Activated CD4-positive, alpha-beta T cell treated with anti-CD3 and anti-CD28 coated beads, Interleukin-2, amount 10 ng/mL, durations not matched to agents 24 days and 14 days (primary cell): ENCODE measurements at regions of chr9 and their contacts with region 1.

Region 1: DNA sequence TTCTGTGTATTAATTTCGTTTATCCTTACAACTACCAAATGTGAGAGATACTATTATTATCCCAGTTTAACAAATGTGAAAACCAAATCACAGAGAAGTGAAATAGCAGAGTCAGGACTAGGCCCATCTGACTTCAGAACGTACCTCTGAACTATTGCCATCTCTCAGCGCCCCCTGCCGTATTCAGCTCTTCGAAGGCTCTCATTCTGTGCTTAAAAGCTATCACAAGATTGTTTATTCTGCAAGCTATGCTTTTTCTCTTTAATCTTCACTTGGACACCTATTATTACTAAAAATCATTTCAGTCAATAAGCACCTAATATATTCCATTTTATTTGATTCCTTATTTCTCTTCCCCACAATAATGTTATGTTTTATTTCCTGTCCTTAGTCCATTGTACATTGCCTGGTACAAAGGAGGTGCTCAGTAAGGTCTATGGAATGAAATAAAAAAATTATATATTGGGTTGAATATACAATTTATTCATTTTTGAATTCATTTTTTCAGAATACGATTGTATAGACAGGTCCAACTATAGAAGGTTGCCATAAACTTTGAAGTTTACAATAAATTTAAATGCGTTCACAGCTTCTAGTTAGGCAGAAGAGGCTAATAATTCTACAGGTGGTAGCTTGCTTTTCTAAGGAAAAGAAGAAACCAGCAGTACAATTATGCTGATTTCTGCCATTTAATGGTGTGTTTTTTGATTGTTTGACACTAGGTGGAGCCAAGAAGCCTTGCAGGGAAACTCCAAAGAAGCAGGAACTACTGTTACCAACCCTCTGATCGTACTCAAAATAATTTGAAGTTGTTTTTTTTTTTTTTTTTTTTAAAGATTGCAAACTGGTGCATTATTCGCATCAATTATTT is 202.2 kb upstream of the DMRTA1 start:
- DNase-seq: peak; percentile 74
- H3K4me3 Mint-ChIP-seq: no peak overlapping the region
- H3K27ac Mint-ChIP-seq: no peak overlapping the region
- H3K4me1 Mint-ChIP-seq: peaks cover 19% of the 10 kb centered on the region
- H3K27me3 Mint-ChIP-seq: peaks cover 55% of the 10 kb centered on the region

Region 2: DNA sequence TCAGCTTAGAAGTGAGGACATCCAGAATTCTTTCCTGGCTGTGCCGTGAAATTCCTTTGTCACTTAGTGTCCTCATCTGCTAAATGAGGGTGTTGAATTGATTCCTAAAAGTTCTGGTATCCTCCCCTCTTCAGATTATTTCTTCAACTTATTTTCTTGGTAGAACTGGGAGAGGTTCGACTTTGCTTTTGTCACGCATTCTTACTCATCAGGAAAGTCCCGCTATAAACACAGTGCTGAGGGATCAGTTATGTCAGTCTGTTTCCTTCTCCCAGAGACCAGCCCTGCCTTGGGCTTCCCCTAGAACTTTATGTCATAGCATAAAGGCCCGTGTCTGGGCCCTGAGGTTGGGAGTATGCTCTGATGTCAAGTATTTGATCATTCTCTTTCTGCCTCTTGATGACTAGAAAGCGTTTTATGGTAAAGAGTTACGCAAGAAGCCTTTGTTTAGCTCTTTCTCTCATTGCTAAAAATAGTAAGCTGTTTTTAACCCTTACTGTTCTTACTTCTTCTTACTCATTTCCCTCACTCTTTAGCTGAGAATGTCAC is 412.3 kb before region 1 on chr9:
- intact Hi-C with region 1: loop called (anchors 5 kb)
- DNase-seq: peak; percentile 84
- H3K4me3 Mint-ChIP-seq: peak overlapping the region; percentile 15
- H3K27ac Mint-ChIP-seq: peak overlapping the region; percentile 29
- H3K4me1 Mint-ChIP-seq: peaks cover 57% of the 10 kb centered on the region
- H3K27me3 Mint-ChIP-seq: no peaks in the 10 kb centered on the region

Region 3: DNA sequence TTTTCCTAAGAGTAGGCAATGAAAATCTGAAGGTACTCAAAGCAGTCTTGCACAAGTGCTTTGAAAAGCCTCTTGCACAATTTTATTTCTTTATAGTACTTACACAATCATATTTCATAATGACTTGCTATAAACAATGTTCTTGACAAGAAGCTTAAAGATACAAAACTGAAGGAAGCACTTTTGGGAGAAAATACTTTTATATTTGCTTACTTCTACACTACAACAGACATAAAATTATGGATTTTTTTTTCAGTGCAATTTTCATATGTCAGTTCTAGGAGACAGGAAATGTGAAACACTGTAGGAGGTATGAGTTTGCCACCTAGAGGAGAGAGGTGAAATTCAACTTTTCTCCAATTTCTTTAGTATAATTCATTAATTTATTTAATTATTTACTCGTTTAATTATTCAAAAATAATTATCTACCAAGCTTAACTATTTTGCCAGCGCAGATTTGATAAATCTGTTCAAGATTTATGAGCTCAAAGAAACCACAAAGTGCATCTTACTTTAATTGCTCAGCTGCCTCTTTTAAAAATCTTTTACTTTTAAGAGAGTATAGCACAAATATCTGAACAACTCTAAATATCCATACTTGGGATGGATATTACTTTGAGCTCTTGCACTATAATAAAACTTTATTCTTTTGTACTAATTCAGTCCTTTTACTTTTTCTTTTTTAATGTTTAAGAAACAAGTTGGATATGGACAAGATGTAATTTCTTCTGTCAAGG is 206.3 kb before region 1 on chr9:
- intact Hi-C with region 1: loop called (anchors 5 kb)
- DNase-seq: no peak
- H3K4me3 Mint-ChIP-seq: no peak overlapping the region
- H3K27ac Mint-ChIP-seq: no peak overlapping the region
- H3K4me1 Mint-ChIP-seq: peaks cover 26% of the 10 kb centered on the region
- H3K27me3 Mint-ChIP-seq: peaks cover 34% of the 10 kb centered on the region

Region 4: DNA sequence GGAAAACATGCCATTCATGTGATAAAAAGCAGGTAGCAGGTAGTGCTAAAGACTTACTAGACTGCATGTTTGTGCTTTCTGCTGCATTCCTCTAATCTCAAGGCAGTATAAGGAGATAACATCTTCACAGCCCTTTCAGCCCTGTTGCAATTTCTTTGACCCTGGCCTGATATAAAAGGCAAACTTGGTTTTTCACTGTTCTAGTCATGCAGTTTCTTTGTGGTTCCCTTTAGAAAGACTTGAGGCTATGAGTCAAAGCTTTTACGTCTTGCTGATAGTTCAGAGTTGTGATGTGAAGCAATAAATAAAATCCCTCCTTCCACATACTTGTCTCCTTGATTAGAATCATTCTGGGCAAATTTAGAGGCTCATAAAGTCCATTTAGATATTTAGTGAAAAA is 146.7 kb before region 1 on chr9:
- intact Hi-C with region 1: loop called (anchors 5 kb)
- DNase-seq: no peak
- H3K4me3 Mint-ChIP-seq: no peak overlapping the region
- H3K27ac Mint-ChIP-seq: no peak overlapping the region
- H3K4me1 Mint-ChIP-seq: peaks cover 24% of the 10 kb centered on the region
- H3K27me3 Mint-ChIP-seq: peaks cover 59% of the 10 kb centered on the region

Region 5: DNA sequence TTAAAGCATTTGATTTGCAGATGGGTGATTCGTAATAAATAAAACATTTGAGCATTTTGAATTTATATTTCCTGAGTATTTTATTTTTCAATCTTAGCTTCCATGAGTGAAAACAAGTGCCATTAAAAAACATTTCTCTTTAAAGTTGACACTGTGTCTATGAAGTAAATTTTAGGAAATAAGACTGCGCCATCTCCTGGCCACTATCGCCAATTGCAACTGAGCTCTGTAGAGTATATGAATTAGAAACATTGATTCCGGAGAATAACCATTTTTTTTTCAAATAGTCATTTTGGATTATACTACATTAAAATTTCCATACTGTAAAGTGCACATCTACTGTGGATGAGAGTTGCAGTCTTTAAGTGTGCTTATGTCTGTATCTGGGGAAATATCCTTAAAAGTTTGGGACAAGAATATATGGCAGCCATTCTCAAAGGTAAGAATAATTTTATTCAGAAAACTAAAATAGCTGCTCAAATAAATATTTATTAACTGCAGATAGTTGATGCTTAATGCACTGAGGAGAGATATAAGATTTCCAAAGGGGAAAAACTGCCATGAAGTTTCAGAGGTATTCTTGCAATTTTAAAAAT is 208.1 kb after region 1 on chr9:
- intact Hi-C with region 1: loop called (anchors 1 kb)
- DNase-seq: peak; percentile 79
- H3K4me3 Mint-ChIP-seq: no peak overlapping the region
- H3K27ac Mint-ChIP-seq: no peak overlapping the region
- H3K4me1 Mint-ChIP-seq: no peaks in the 10 kb centered on the region
- H3K27me3 Mint-ChIP-seq: peaks cover 25% of the 10 kb centered on the region